ENCODE measurements at regions of chr2 and their contacts with region 1.

Region 1: DNA sequence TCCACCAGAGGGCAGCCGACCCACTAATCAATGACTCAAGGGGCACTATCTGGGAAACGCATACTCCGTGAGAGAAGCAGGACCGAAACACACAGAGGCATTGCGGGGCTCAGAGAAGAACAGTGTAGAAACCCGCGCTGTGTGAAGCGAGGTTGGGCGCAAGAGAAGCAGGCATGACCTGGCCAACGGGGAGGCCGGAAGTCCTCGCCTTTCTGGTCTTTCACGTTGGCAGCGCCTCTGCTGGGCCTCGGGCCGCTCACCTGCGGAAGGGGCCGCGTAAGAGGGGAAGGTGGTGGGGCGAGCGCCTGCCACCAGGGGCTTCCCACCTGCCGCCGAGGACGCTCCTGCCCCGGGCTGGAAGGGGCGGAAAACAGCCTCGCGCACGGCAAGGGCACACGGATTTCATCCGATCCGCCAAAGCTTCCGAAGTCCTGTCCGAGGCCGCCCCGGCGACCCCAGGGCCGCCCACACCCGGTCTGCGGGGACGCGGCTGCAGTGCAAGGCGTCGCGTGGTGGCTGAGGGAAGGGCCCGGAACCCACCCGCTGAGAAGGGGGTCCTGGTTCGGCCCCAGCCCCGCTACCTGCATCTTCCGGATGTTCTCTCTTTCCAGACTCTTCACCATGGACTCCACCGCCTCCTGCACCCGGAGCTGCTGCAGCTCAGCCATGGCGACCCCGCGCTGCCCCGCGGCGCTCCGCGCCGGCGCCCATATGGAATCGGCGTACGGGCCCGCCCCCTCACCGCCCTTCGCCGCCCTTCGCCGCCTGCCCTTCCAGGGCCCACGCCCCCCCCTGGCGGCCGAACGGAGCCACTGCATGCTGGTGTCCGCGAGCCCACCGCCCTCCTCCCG is at the start of gene FAM136A:
- DNase-seq: peak; percentile 92
- H3K4me3 Mint-ChIP-seq: peak within 1 kb of the TSS; percentile 93
- H3K27ac Mint-ChIP-seq: peak within 1 kb of the TSS; percentile 94
- H3K4me1 Mint-ChIP-seq: peaks cover 38% of the 10 kb centered on the region
- H3K27me3 Mint-ChIP-seq: no peaks in the 10 kb centered on the region
- total RNA-seq, gene FAM136A: 41.9 to 44.0 TPM

Region 2: DNA sequence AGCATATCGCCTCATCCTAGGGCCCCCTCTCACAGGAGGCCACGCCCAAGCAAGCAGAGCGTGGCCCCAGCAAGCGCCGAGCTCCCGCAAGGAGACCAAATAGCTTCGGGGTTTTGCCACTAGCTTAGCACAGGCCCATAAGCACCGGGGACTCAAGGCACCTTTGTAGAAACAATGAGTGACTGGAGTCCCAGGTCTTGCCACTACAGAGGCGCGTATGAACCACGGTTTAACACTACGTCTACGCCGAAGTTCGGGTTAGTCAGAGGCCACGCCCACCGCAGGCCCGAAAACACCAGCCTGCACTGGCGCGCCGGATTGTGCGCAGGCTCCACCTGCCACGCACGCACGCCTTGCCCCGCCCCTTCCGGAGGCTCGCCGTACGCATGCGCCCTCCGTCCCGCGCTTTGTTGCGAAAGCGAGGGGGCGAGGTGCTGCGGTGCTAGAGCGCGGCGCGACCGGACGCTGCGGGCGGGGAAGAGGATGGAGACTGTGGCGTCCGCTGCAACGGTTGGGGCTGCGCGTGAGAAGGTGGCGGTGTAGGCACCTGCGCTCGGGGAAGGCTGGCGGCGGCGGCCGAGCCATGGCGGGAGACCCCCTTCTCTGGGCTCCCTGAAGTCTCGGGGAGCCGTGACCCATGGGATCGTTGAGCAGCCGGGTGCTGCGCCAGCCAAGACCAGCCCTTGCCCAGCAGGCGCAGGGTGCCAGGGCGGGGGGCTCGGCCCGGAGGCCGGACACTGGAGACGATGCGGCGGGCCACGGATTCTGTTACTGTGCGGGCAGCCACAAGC is 472.1 kb before region 1 on chr2 and contains the start of gene GMCL1:
- CTCF ChIA-PET with region 1: no interaction called
- intact Hi-C with region 1: no loop called
- DNase-seq: peak; percentile 99
- H3K4me3 Mint-ChIP-seq: peak within 1 kb of the TSS; percentile 94
- H3K27ac Mint-ChIP-seq: peak within 1 kb of the TSS; percentile 88
- H3K4me1 Mint-ChIP-seq: peaks cover 51% of the 10 kb centered on the region
- H3K27me3 Mint-ChIP-seq: no peaks in the 10 kb centered on the region
- total RNA-seq, gene GMCL1: 15.9 to 19.4 TPM

Region 3: GRCh38 chr2:70009762-70010575 is 291.6 kb before region 1 on chr2:
- CTCF ChIA-PET with region 1: no interaction called
- intact Hi-C with region 1: no loop called
- DNase-seq: no peak
- H3K4me3 Mint-ChIP-seq: no peak overlapping the region
- H3K27ac Mint-ChIP-seq: no peak overlapping the region
- H3K4me1 Mint-ChIP-seq: peaks cover 6% of the 10 kb centered on the region
- H3K27me3 Mint-ChIP-seq: no peaks in the 10 kb centered on the region

Region 4: DNA sequence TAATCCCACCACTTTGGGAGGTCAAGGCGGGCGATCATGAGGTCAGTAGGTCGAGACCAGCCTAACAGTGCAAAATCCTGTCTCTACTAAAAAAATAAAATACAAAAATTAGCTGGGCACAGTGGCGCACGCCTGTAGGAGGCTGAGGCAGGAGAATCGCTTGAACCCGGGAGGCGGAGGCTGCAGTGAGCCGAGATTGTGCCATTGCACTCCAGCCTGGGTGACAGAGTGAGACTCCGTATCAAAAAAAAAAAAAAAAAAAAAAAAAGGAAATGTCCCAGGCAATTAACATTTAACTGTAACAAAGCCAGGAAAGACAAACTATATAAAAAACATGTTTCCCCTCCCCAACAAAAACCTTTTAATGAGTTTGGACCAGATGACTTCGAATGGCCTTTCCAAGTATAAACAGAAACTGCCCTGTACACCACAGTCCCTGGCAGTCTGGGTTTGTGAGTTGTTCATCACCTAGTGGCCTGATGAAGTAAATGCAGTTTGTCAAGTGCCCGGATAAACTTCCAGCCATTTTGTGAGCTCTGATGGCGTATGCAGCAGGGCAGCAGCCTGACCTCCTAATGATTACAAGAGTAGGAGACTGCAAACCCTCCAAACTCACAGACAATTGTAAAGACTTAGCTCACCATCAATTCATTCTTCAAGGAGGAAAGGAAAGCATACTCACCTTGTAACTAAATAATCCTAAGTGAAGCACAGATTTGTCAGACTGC is 230.9 kb before region 1 on chr2:
- CTCF ChIA-PET with region 1: interaction called, 10 read pairs
- intact Hi-C with region 1: no loop called
- DNase-seq: peak; percentile 76
- H3K4me3 Mint-ChIP-seq: peak overlapping the region; percentile 54
- H3K27ac Mint-ChIP-seq: peak overlapping the region; percentile 94
- H3K4me1 Mint-ChIP-seq: peaks cover 57% of the 10 kb centered on the region
- H3K27me3 Mint-ChIP-seq: no peaks in the 10 kb centered on the region

Region 5: GRCh38 chr2:70248181-70248847 is 53.3 kb before region 1 on chr2 and contains the start of gene TIA1:
- CTCF ChIA-PET with region 1: no interaction called
- intact Hi-C with region 1: loop called (anchors 1 kb)
- DNase-seq: peak; percentile 99
- H3K4me3 Mint-ChIP-seq: peak within 1 kb of the TSS; percentile 99
- H3K27ac Mint-ChIP-seq: peak within 1 kb of the TSS; percentile 98
- H3K4me1 Mint-ChIP-seq: peaks cover 32% of the 10 kb centered on the region
- H3K27me3 Mint-ChIP-seq: no peaks in the 10 kb centered on the region
- total RNA-seq, gene TIA1: 83.2 to 83.9 TPM

Region 6: GRCh38 chr2:70340921-70341765 is 39.6 kb after region 1 on chr2:
- CTCF ChIA-PET with region 1: interaction called, 25 read pairs
- intact Hi-C with region 1: loop called (anchors 1 kb)
- DNase-seq: peak; percentile 60
- H3K4me3 Mint-ChIP-seq: no peak overlapping the region
- H3K27ac Mint-ChIP-seq: no peak overlapping the region
- H3K4me1 Mint-ChIP-seq: peaks cover 5% of the 10 kb centered on the region
- H3K27me3 Mint-ChIP-seq: no peaks in the 10 kb centered on the region

Region 7: GRCh38 chr2:70412294-70413070 is 110.9 kb after region 1 on chr2:
- CTCF ChIA-PET with region 1: no interaction called
- intact Hi-C with region 1: no loop called
- DNase-seq: no peak
- H3K4me3 Mint-ChIP-seq: no peak overlapping the region
- H3K27ac Mint-ChIP-seq: no peak overlapping the region
- H3K4me1 Mint-ChIP-seq: no peaks in the 10 kb centered on the region
- H3K27me3 Mint-ChIP-seq: no peaks in the 10 kb centered on the region

Region 8: DNA sequence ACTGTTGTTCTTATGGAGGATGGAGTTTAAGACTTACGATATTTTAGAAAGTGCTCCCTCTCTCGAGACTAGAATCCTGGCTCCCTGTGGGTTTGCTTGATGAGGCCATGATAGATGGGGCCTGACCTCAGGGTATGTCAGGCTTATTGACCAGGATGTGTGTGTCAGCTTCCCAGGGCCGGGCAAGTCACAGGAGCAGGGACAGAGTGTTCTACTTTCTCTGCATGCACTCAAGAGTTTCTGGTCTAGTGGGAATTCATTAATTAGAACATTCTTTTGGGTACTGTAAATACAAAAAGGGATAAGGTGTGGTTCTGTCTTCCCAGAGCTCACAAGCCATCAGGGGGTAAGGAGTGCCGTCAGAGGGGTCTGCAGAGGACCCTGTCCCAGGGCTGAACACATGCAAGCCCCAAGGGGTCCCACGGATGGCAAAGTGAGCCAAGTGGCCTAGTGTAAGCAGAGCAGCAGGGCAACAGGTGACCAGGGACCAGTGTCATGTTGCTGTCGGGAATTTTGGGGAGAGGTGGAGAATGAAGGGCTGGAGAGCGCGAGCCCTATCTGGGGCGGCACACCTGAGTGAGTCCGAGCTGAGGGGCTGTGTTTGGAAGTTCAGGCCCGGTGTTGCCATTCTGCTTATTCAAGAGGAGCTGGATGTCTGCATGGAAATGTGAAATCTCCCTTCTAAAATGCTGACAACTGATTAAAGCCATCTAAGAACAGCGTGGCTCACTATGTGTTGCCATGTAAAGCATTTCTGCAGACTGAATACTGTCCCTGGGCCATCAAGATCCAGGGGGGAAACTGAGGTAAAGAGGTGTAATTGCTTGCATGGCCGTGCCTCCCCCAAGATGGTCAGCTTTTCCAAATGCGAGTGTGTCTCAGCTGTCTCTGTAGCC is 160.7 kb after region 1 on chr2:
- CTCF ChIA-PET with region 1: no interaction called
- intact Hi-C with region 1: no loop called
- DNase-seq: no peak
- H3K4me3 Mint-ChIP-seq: no peak overlapping the region
- H3K27ac Mint-ChIP-seq: no peak overlapping the region
- H3K4me1 Mint-ChIP-seq: peaks cover 1% of the 10 kb centered on the region
- H3K27me3 Mint-ChIP-seq: no peaks in the 10 kb centered on the region

Region 9: GRCh38 chr2:70639841-70640436 is 338.4 kb after region 1 on chr2:
- CTCF ChIA-PET with region 1: interaction called, 121 read pairs
- intact Hi-C with region 1: loop called (anchors 1 kb)
- DNase-seq: no peak
- H3K4me3 Mint-ChIP-seq: no peak overlapping the region
- H3K27ac Mint-ChIP-seq: no peak overlapping the region
- H3K4me1 Mint-ChIP-seq: peaks cover 25% of the 10 kb centered on the region
- H3K27me3 Mint-ChIP-seq: no peaks in the 10 kb centered on the region

Region 10: DNA sequence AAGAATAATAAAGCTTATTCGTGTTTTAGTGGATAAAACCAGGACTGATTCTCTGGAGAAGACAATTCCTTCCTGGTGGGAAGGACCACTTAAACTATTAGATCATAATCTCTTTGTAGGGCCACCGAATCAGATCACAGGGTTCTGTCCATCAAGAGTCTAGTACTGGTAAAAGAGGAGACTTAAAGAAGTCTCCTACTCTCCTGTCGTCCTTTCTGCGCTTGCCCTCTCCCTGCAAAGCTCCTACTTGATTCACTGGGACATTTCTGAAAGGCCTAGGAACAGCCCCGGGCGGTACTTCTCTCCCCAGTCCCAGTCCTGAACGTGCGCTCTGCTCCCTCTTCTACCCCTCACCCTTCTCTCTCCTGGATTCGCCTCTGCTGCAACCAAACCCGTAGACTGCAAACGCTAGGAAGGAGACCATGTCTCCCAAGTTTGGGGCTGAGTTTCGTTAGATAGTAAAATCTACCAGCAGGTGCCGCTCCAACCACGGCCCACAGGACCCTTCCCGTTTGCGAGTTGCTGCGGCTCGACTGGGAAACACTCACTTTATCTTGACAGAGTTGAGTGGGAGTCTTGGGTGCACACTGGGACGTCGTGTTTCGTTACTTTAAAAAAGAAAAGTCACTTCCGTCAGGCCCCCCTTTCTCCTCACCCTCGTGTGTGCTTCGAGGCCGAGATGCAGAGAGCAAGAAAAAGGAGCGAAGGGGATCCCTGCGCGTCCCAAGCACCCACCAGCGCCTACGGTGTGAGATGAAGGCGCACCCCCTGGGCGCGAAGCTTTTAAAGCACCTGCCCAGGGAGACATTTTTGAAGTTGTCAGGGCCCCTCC is 488.0 kb after region 1 on chr2:
- CTCF ChIA-PET with region 1: interaction called, 7 read pairs
- intact Hi-C with region 1: loop called (anchors 1 kb)
- DNase-seq: peak; percentile 89
- H3K4me3 Mint-ChIP-seq: peak overlapping the region; percentile 74
- H3K27ac Mint-ChIP-seq: no peak overlapping the region
- H3K4me1 Mint-ChIP-seq: peaks cover 14% of the 10 kb centered on the region
- H3K27me3 Mint-ChIP-seq: peaks cover 40% of the 10 kb centered on the region